OCI-LY7 (cell line): ENCODE measurements at regions of chr1 and their contacts with region 1.

Region 1: GRCh38 chr1:241566651-241567050 is 34.5 kb downstream of the KMO start:
- DNase-seq: no peak
- H3K4me3 ChIP-seq: no peak overlapping the region
- H3K27ac ChIP-seq: no peak overlapping the region
- H3K4me1 ChIP-seq: no peaks in the 10 kb centered on the region
- CTCF ChIP-seq: no peak

Region 2: GRCh38 chr1:241555526-241555925 is 11.1 kb before region 1 on chr1:
- CTCF ChIA-PET with region 1: no interaction called
- POLR2A ChIA-PET with region 1: interaction called, 11 read pairs
- intact Hi-C with region 1: no loop called
- DNase-seq: no peak
- H3K4me3 ChIP-seq: no peak overlapping the region
- H3K27ac ChIP-seq: no peak overlapping the region
- H3K4me1 ChIP-seq: peaks cover 21% of the 10 kb centered on the region
- CTCF ChIP-seq: no peak